Dendritic cell treated with granulocyte-macrophage colony-stimulating factor and Interleukin-4, amounts not matched to agents 40 ng/mL and 50 ng/mL, for 4 days (primary cell): ENCODE measurements at regions of chr1 and their contacts with region 1.

Region 1: DNA sequence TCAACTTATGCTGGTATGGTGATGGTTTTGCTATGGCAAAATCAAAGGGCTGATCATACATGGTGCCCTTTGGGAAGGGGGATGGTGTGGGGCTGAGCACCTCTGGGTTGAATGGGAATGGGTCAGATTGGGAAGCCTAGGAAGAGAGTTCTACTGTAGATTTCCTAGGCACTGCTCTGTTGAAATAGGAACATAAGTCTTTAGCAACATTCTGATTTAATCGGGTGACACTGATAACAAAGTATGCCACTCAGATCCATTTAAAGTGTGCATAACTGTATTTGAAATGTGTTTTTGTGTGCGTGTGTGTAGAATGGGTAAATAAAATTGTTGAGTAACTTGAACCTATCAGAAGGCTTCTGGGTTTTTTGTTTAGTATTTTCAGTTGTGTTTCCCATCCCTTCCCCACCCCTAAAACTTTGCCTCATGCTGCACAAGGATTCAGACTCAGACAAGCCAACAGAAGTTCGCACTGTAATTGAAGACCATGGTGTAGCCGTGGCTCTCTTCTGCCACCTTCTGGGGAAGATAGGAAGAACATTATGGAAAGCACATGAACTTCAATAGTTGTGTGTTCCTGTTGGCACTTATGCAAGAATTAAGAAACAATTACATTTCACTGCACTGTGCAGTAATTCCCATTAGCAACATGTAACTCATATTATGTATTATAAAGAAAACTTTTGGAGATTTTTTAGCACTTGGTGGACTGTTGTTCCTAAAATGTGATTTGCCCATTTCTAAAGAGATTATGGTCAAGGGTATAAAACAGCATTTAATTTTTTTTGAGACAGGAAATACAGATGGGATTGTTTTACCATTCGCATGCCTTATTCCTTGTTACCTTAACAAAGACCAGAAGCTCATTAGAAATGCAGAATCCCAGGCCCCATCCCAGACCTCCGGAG is 10.9 kb upstream of the C4BPB start:
- H3K4me3 Mint-ChIP-seq: no peak overlapping the region
- H3K27ac Mint-ChIP-seq: no peak overlapping the region
- H3K4me1 Mint-ChIP-seq: peaks cover 5% of the 10 kb centered on the region
- H3K27me3 Mint-ChIP-seq: peaks cover 5% of the 10 kb centered on the region

Region 2: DNA sequence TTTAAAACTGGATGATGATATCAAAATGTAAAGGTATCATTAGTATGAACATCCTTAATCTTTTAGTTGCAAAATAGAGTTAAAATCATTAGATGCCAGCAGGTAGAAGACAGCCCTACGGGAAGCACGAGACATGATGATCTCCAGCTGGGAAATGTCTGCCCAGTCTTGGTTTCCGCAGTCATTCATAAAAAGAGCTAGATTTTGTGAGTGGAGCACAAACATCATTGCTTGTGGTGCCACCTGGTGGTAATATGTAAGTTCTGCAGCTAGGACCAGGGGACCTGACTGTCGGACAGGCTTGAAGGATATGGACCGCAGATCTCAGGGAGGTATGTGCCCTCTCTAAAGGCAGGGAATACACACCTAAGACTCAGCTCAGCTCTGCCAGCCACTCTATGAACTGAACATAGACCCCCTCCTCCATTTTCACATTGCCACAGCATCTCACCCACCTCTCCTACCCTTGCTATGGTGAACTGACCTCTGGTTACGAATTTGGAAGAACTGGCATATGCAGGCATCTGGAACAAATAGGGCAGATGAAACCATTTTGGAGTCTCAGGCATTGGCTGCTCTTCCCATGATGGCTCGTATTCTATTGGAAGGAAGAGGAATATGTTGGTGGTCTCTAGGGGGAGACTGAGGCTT is 165.2 kb before region 1 on chr1:
- intact Hi-C with region 1: no loop called
- H3K4me3 Mint-ChIP-seq: no peak overlapping the region
- H3K27ac Mint-ChIP-seq: no peak overlapping the region
- H3K4me1 Mint-ChIP-seq: peaks cover 10% of the 10 kb centered on the region
- H3K27me3 Mint-ChIP-seq: peaks cover 64% of the 10 kb centered on the region

Region 3: GRCh38 chr1:206935491-206936067 is 142.1 kb before region 1 on chr1:
- intact Hi-C with region 1: loop called (anchors 10 kb)
- H3K4me3 Mint-ChIP-seq: no peak overlapping the region
- H3K27ac Mint-ChIP-seq: no peak overlapping the region
- H3K4me1 Mint-ChIP-seq: peaks cover 29% of the 10 kb centered on the region
- H3K27me3 Mint-ChIP-seq: peaks cover 17% of the 10 kb centered on the region

Region 4: GRCh38 chr1:207007352-207008033 is 70.2 kb before region 1 on chr1:
- intact Hi-C with region 1: loop called (anchors 2 kb)
- H3K4me3 Mint-ChIP-seq: no peak overlapping the region
- H3K27ac Mint-ChIP-seq: no peak overlapping the region
- H3K4me1 Mint-ChIP-seq: peaks cover 12% of the 10 kb centered on the region
- H3K27me3 Mint-ChIP-seq: peaks cover 17% of the 10 kb centered on the region

Region 5: GRCh38 chr1:207040181-207040533 is 37.6 kb before region 1 on chr1:
- intact Hi-C with region 1: no loop called
- H3K4me3 Mint-ChIP-seq: no peak overlapping the region
- H3K27ac Mint-ChIP-seq: no peak overlapping the region
- H3K4me1 Mint-ChIP-seq: no peaks in the 10 kb centered on the region
- H3K27me3 Mint-ChIP-seq: peaks cover 5% of the 10 kb centered on the region